ENCODE measurements at regions of chr5 and their contacts with region 1.

Region 1: GRCh38 chr5:172106511-172107356 is 81.3 kb downstream of the STK10 start:
- DNase-seq: peak; percentile 79
- ATAC-seq: no peak
- H3K4me3 Mint-ChIP-seq: no peak overlapping the region
- H3K27ac Mint-ChIP-seq: peak overlapping the region; percentile 73
- H3K4me1 Mint-ChIP-seq: peaks cover 61% of the 10 kb centered on the region
- H3K27me3 Mint-ChIP-seq: no peaks in the 10 kb centered on the region

Region 2: DNA sequence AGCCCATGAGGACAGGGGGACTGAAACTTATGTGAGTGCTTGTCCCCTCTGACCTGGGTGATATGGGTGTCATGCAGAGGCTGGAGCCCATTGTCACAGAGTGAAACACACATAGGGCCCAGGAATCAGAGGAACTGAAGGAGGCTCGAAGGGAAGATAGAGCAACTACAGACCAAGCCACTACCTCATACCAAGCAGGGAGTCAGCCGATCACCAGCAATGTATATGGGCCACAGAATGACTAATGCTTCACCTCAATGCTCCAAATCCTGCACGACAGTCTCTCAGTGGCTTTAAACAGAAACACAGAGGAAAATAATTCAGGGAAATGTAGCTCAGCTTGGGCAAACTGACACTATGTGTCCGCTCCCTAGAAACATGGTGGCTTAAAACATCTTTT is 91.4 kb before region 1 on chr5:
- CTCF ChIA-PET with region 1: no interaction called
- POLR2A ChIA-PET with region 1: no interaction called
- intact Hi-C with region 1: no loop called
- DNase-seq: no peak
- ATAC-seq: peak; percentile 58
- H3K4me3 Mint-ChIP-seq: no peak overlapping the region
- H3K27ac Mint-ChIP-seq: no peak overlapping the region
- H3K4me1 Mint-ChIP-seq: no peaks in the 10 kb centered on the region
- H3K27me3 Mint-ChIP-seq: no peaks in the 10 kb centered on the region

Region 3: DNA sequence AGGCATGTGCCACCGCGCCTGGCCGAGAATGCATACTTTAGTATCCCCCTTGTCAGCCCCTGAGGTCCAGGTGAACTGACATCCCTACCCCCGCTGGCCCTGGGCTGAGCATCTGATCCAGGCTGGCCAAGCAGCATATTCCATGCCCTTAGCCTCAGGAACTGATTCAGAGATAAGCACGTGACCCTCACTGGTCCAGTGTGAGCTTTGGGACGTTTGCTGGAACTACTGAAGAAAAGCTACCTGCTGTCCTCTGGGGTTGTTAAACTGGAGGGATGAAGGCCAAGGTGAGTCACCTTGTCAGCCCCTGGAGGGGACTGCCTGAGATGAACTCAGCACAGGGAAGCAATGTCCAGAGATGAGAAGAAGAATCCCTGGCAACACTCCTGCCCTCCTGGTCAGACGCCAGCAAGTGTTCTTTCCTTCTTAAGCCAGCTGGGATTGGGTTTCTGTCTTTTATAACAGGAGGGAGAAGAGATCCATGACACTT is 41.2 kb before region 1 on chr5:
- CTCF ChIA-PET with region 1: interaction called, 3 read pairs
- POLR2A ChIA-PET with region 1: no interaction called
- intact Hi-C with region 1: loop called (anchors 2 to 5 kb)
- DNase-seq: no peak
- ATAC-seq: no peak
- H3K4me3 Mint-ChIP-seq: no peak overlapping the region
- H3K27ac Mint-ChIP-seq: peak overlapping the region; percentile 51
- H3K4me1 Mint-ChIP-seq: peaks cover 57% of the 10 kb centered on the region
- H3K27me3 Mint-ChIP-seq: no peaks in the 10 kb centered on the region

Region 4: GRCh38 chr5:172133359-172134029 is 26.8 kb after region 1 on chr5:
- CTCF ChIA-PET with region 1: interaction called, 3 read pairs
- POLR2A ChIA-PET with region 1: no interaction called
- intact Hi-C with region 1: loop called in 1 of 2 experiments (anchors 1 kb)
- DNase-seq: peak; percentile 83
- ATAC-seq: peak; percentile 99
- H3K4me3 Mint-ChIP-seq: peak overlapping the region; percentile 11
- H3K27ac Mint-ChIP-seq: peak overlapping the region; percentile 99
- H3K4me1 Mint-ChIP-seq: peaks cover 59% of the 10 kb centered on the region
- H3K27me3 Mint-ChIP-seq: no peaks in the 10 kb centered on the region

Region 5: GRCh38 chr5:172283020-172283861 is 176.5 kb after region 1 on chr5 and contains the start of gene UBTD2:
- CTCF ChIA-PET with region 1: interaction called, 6 read pairs
- POLR2A ChIA-PET with region 1: interaction called, 6 read pairs
- intact Hi-C with region 1: loop called (anchors 1 to 2 kb)
- DNase-seq: peak; percentile 84
- ATAC-seq: peak; percentile 85
- H3K4me3 Mint-ChIP-seq: peak within 1 kb of the TSS; percentile 85
- H3K27ac Mint-ChIP-seq: peak within 1 kb of the TSS; percentile 87
- H3K4me1 Mint-ChIP-seq: peaks cover 16% of the 10 kb centered on the region
- H3K27me3 Mint-ChIP-seq: no peaks in the 10 kb centered on the region
- total RNA-seq, gene UBTD2: 6.0 to 6.1 TPM

Region 6: DNA sequence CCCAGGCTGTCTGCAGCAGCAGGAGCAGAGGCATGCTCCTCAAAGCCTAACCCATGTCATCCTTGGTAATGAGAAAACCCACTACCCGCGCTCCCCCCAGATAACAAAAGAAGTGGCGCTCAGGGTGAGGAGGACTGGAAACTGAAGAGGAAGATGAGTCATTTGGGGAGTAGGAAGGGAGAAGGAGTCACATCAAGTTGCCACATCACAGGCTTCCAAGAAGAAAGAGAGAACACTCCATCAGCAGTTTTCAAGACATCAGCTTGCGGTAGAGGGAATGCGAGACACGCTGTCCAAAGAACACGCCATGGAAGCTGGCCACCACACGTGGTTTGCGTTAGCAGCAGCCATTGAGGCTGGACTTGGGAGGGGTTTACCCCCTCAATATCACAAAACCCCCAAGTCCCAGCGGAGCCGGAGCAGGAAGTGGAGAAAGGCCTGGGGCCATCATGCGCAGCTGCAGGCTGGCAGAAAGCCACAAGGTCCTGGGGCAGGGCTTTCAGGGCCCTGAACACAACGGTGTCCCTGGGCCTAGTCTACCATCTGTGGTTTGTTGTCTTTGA is 306.1 kb after region 1 on chr5:
- CTCF ChIA-PET with region 1: no interaction called
- POLR2A ChIA-PET with region 1: no interaction called
- intact Hi-C with region 1: loop called in 1 of 2 experiments (anchors 2 kb)
- DNase-seq: peak; percentile 46
- ATAC-seq: peak; percentile 20
- H3K4me3 Mint-ChIP-seq: no peak overlapping the region
- H3K27ac Mint-ChIP-seq: peak overlapping the region; percentile 45
- H3K4me1 Mint-ChIP-seq: peaks cover 33% of the 10 kb centered on the region
- H3K27me3 Mint-ChIP-seq: peaks cover 7% of the 10 kb centered on the region

Region 7: GRCh38 chr5:172443441-172444109 is 336.8 kb after region 1 on chr5:
- CTCF ChIA-PET with region 1: no interaction called
- POLR2A ChIA-PET with region 1: no interaction called
- intact Hi-C with region 1: no loop called
- DNase-seq: peak; percentile 89
- ATAC-seq: peak; percentile 89
- H3K4me3 Mint-ChIP-seq: no peak overlapping the region
- H3K27ac Mint-ChIP-seq: peak overlapping the region; percentile 52
- H3K4me1 Mint-ChIP-seq: peaks cover 14% of the 10 kb centered on the region
- H3K27me3 Mint-ChIP-seq: peaks cover 19% of the 10 kb centered on the region

Measured in activated CD4-positive, alpha-beta T cell treated with anti-CD3 and anti-CD28 coated beads for 36 hours (primary cell).